ENCODE measurements at regions of chr19 and their contacts with region 1.

Region 1: DNA sequence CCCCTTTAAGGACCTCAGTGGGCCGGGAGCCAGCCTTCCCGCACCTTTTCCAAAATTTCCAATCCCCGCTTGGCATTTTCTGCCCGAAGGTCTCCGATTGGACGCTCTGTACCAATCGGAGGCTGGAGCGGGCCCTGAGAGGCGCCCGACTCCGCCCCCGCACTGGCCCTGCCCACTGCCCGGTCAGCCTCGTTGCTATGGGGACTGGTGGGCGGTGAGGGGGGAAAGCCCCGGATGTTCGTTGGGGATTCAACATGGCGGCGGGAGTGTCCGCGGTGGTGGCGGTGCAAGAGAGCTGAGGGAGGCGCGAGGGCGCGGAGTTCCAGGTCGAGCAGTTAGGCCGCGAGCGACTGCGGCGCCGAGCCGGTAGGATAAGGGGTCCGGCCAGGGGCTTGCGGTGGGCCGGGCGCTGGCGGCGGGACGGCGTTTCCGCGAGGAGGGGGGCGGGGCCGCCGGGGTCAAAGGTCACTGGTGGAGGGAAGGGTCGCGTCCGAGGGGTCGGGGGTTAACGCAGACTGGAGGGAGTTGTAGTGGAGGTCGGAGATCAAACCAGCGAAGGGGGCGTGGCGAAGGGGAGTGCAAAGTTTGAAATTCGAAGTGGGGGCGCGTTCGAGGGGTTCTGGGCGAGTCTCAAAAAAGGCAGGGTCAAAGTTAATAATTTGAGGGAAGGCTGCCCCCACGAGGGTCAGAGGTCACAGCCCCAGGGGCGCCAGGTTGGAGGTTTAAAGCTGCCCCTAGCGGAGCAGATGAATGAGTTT is at the start of gene PAK4:
- DNase-seq: peak; percentile 95
- ATAC-seq: peak; percentile 98
- H3K4me3 Mint-ChIP-seq: peak within 1 kb of the TSS; percentile 94
- H3K27ac Mint-ChIP-seq: peak within 1 kb of the TSS; percentile 93
- H3K4me1 Mint-ChIP-seq: peaks cover 42% of the 10 kb centered on the region
- H3K27me3 Mint-ChIP-seq: peaks cover 5% of the 10 kb centered on the region
- CTCF ChIP-seq: no peak
- total RNA-seq, gene PAK4: 13.7 and 14.2 TPM in 2 replicates

Region 2: GRCh38 chr19:39328046-39328705 is 202.4 kb after region 1 on chr19:
- CTCF ChIA-PET with region 1: interaction called, 40 read pairs
- POLR2A ChIA-PET with region 1: interaction called, 5 read pairs
- intact Hi-C with region 1: loop called (anchors 1 kb)
- DNase-seq: peak; percentile 77
- ATAC-seq: peak; percentile 96
- H3K4me3 Mint-ChIP-seq: no peak overlapping the region
- H3K27ac Mint-ChIP-seq: no peak overlapping the region
- H3K4me1 Mint-ChIP-seq: peaks cover 22% of the 10 kb centered on the region
- H3K27me3 Mint-ChIP-seq: no peaks in the 10 kb centered on the region
- CTCF ChIP-seq: no peak

Region 3: DNA sequence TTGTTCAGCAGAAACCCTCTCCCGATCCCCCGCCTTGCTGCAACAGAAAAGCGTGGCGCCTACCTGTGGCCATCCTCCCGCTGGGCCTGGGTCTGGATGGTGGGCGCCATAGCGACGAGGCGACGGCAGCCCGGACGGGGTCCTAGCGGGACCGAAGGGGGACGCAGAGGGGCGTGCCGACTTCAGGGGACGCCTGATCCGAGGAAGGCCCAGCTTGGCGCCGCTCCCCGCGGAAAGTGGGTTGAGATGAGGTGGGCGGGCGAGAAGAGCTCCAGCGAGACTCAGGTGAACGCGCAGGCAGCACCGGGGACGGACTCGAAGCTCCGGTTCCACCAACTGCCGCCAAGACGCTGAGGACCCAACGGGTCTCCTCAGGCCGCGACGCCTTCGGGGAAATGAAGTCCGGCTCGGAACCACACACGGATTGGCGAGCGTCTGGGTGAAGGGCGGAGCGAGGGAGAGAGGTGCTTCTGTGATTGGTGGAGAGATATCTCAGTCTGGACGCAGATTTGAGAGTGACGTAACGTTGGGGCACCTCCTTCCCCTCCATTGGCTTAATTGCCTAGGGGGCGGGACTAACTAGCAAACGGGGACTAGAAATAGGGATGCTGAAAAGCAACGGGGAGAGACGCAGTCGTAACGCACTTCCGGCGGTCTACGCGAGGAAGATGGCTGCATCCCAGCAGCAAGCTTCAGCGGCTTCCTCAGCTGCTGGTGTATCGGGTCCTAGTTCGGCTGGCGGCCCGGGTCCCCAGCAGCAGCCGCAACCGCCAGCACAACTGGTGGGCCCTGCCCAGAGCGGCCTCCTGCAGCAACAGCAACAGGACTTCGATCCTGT is 265.2 kb after region 1 on chr19 and contains the starts of genes MED29 and PAF1:
- CTCF ChIA-PET with region 1: interaction called, 5 read pairs
- POLR2A ChIA-PET with region 1: interaction called, 4 read pairs
- intact Hi-C with region 1: loop called (anchors 2 kb)
- DNase-seq: peak; percentile 84
- ATAC-seq: peak; percentile 91
- H3K4me3 Mint-ChIP-seq: peak within 1 kb of the TSS; percentile 91
- H3K27ac Mint-ChIP-seq: peak within 1 kb of the TSS; percentile 98
- H3K4me1 Mint-ChIP-seq: peaks cover 38% of the 10 kb centered on the region
- H3K27me3 Mint-ChIP-seq: no peaks in the 10 kb centered on the region
- CTCF ChIP-seq: no peak
- total RNA-seq, gene MED29: 38.0 and 39.0 TPM in 2 replicates
- total RNA-seq, gene PAF1: 50.3 and 52.4 TPM in 2 replicates

Region 4: DNA sequence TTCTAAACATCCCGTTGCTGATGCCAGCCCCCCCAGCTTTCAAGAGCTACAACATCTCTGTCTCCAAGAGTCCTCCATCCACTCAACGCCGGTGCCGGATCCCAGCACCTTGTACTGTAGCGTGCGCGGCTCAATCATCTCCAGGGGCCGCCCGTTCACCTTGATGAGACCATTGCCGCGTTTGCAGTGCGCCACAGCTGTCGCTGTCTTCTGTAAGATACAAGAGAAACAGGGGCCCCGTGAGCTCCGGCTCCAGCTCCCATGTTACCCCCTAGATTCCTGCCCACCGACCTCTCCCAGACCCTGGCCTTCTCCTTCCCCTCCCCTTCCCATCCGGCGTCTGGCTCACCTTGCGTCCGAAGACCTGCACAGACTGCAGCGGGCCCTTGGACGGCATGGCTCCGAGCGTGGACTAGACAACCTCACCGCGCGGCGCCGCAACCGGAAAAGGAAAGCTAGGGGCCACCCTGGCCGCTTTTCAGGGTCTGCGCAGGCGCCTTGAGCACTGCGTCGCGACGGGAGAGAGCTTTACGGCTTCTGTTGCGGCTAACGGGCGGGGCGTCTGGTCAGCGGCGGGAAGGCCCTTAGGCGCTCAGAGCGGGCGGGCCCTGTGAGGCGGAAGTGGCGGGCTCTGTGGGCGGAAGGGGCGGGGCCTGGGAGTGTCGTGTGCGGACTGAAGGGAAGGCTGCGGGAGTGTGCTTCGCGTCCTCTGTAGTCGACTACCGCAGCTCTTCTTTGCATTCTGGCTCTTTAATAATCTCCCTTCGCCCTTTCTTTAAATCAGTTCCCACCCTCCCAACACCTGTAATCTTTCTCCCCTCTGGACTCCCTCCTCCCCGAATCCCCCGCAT is 310.0 kb after region 1 on chr19 and contains the start of gene RPS16:
- CTCF ChIA-PET with region 1: no interaction called
- POLR2A ChIA-PET with region 1: interaction called, 11 read pairs
- intact Hi-C with region 1: no loop called
- DNase-seq: peak; percentile 98
- ATAC-seq: peak; percentile 92
- H3K4me3 Mint-ChIP-seq: peak within 1 kb of the TSS; percentile 98
- H3K27ac Mint-ChIP-seq: peak within 1 kb of the TSS; percentile 96
- H3K4me1 Mint-ChIP-seq: peaks cover 53% of the 10 kb centered on the region
- H3K27me3 Mint-ChIP-seq: no peaks in the 10 kb centered on the region
- CTCF ChIP-seq: no peak
- total RNA-seq, gene RPS16: 4,002 and 4,656 TPM in 2 replicates

Region 5: DNA sequence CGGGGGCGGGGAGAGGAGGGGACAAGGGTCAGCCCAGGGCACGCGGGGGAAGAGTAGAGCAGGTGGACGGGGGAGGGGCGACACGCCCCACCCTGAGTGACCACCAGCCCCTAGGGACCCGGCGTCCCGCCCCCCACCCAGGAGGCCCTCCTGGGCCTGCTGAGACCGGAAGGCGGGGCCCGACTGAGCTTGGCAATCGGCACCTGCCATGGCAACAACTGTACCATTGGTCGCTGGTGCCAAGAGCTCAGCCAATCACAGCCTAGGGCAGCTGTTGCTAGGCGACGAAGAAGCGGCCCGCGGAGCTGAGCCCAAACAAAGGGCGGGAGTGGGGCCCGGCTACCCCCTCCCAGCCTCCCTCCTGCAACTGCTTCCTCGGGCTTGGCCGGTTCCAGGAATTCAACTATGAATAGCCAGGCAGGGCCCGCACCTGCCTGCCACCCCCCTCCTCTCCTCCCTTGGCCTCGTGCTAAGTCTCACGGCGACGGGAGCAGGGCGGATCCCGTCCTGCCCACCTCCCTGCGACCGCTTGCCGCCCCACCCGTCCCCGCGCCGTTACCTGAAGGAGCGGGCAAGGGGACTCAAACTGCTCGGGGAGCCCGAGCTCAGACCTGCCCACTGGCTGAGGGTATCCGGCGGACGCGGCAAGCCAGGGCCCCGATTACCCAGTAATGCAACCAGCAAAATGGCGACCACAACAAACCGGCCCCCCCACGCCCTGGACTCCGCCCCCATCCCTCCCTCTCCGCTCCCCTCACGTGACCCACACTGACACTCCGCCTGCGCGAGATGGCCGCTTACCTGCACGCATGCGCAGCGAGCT is 707.9 kb after region 1 on chr19 and contains the start of gene DYRK1B:
- CTCF ChIA-PET with region 1: no interaction called
- POLR2A ChIA-PET with region 1: no interaction called
- intact Hi-C with region 1: loop called (anchors 10 kb)
- DNase-seq: peak; percentile 90
- ATAC-seq: peak; percentile 86
- H3K4me3 Mint-ChIP-seq: peak within 1 kb of the TSS; percentile 82
- H3K27ac Mint-ChIP-seq: peak within 1 kb of the TSS; percentile 87
- H3K4me1 Mint-ChIP-seq: peaks cover 33% of the 10 kb centered on the region
- H3K27me3 Mint-ChIP-seq: no peaks in the 10 kb centered on the region
- CTCF ChIP-seq: no peak
- total RNA-seq, gene DYRK1B: 16.9 and 17.2 TPM in 2 replicates

Measured in activated B cell treated with CpG ODN at 0.5 μM for 24 hours (primary cell).